ENCODE measurements at regions of chr2 and their contacts with region 1.

Region 1: GRCh38 chr2:182666674-182667314 is 49.3 kb upstream of the DNAJC10 start:
- DNase-seq: peak; percentile 31
- H3K4me3 Mint-ChIP-seq: no peak overlapping the region
- H3K27ac Mint-ChIP-seq: no peak overlapping the region
- H3K4me1 Mint-ChIP-seq: peaks cover 27% of the 10 kb centered on the region
- H3K27me3 Mint-ChIP-seq: no peaks in the 10 kb centered on the region
- CTCF ChIP-seq: no peak

Region 2: DNA sequence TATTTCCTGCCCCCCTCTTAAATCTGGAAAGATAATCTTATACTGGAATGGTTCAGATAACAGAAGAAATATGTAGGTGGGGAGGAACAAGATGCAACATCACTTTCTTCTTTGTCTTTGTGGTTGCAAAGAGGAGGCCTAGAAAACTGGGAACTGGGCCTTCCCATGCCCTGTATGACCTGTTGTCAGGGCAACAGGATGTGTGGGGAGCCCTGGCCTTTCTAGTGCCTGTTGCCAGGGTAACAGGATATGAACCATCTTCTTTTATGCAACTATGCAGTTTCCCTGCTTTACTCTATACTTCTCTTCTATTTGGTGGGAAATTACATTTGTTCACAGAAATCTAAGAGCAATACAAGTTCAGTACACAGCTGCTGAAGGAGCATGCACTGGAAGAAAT is 160.2 kb before region 1 on chr2:
- CTCF ChIA-PET with region 1: no interaction called
- intact Hi-C with region 1: no loop called
- DNase-seq: no peak
- H3K4me3 Mint-ChIP-seq: no peak overlapping the region
- H3K27ac Mint-ChIP-seq: no peak overlapping the region
- H3K4me1 Mint-ChIP-seq: no peaks in the 10 kb centered on the region
- H3K27me3 Mint-ChIP-seq: no peaks in the 10 kb centered on the region
- CTCF ChIP-seq: no peak

Region 3: DNA sequence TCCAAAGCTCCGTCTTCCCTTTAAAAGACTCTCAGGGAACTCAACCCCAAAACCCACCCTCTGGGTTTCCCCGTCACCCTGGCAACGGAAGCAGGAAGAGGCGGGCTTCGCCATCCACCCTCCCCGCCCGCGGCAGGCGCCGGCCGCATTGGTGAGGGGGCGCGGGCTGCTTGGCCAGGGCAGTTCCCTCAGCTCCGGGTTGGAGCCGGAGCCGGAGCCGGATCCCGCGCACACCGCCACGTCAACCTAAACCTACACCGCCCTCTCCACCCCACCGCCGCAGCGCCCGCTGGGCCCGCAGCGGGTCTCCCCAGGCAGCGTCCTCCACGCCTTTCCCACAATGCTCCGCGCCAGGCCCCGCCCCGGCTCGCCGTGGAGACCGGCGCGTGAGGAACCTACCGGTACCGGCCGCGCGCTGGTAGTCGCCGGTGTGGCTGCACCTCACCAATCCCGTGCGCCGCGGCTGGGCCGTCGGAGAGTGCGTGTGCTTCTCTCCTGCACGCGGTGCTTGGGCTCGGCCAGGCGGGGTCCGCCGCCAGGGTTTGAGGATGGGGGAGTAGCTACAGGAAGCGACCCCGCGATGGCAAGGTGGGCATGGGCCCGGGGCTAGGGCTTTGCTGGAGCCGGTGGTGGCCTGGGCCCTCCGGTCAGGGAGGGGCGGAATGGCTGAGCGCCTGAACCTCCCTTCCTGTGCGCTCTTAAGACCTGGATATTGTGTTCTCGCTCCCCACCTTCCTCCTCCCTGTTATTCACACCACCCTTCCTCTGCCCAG is 49.3 kb after region 1 on chr2 and contains the start of gene DNAJC10:
- CTCF ChIA-PET with region 1: interaction called, 10 read pairs
- intact Hi-C with region 1: loop called (anchors 2 kb)
- DNase-seq: peak; percentile 95
- H3K4me3 Mint-ChIP-seq: no peak within 1 kb of the TSS
- H3K27ac Mint-ChIP-seq: no peak within 1 kb of the TSS
- H3K4me1 Mint-ChIP-seq: peaks cover 7% of the 10 kb centered on the region
- H3K27me3 Mint-ChIP-seq: no peaks in the 10 kb centered on the region
- CTCF ChIP-seq: no peak
- total RNA-seq, gene DNAJC10: 178 and 210 TPM in 2 replicates

Region 4: GRCh38 chr2:182836451-182836850 is 169.7 kb after region 1 on chr2:
- CTCF ChIA-PET with region 1: no interaction called
- intact Hi-C with region 1: no loop called
- DNase-seq: no peak
- H3K4me3 Mint-ChIP-seq: no peak overlapping the region
- H3K27ac Mint-ChIP-seq: no peak overlapping the region
- H3K4me1 Mint-ChIP-seq: no peaks in the 10 kb centered on the region
- H3K27me3 Mint-ChIP-seq: no peaks in the 10 kb centered on the region
- CTCF ChIP-seq: no peak

Region 5: DNA sequence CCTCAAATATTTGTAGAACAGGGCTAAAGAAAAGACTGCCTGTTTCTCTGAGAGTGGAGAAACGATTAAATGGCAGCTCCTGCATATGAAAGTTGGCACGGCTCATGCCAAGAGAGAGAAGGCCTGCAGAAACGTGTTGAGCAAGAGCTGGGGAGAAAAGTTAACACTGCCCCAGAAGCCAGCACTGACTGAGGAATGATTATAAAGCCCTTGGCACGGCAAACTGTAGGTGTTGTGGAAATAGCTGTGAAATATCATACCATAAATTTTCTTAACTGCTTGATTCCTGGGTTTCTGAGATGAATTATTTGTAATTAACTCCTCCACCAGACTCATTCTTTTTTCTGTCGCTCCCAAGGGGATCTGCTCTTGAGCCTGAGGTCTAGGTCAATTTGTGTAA is 195.3 kb after region 1 on chr2:
- CTCF ChIA-PET with region 1: no interaction called
- intact Hi-C with region 1: no loop called
- DNase-seq: no peak
- H3K4me3 Mint-ChIP-seq: no peak overlapping the region
- H3K27ac Mint-ChIP-seq: no peak overlapping the region
- H3K4me1 Mint-ChIP-seq: peaks cover 9% of the 10 kb centered on the region
- H3K27me3 Mint-ChIP-seq: peaks cover 18% of the 10 kb centered on the region
- CTCF ChIP-seq: no peak

Region 6: GRCh38 chr2:182949572-182950189 is 282.9 kb after region 1 on chr2:
- CTCF ChIA-PET with region 1: no interaction called
- intact Hi-C with region 1: no loop called
- DNase-seq: peak; percentile 9
- H3K4me3 Mint-ChIP-seq: no peak overlapping the region
- H3K27ac Mint-ChIP-seq: peak overlapping the region; percentile 3
- H3K4me1 Mint-ChIP-seq: peaks cover 18% of the 10 kb centered on the region
- H3K27me3 Mint-ChIP-seq: no peaks in the 10 kb centered on the region
- CTCF ChIP-seq: no peak